PC-3 (cell line): ENCODE measurements at regions of chr17 and their contacts with region 1.

Region 1: GRCh38 chr17:69175812-69176795 is 34.4 kb upstream of the ABCA6 start:
- DNase-seq: peak; percentile 95
- ATAC-seq: peak; percentile 99
- H3K4me3 ChIP-seq: peak overlapping the region; percentile 2; the same call in 1 of the 2 replicates
- H3K27ac ChIP-seq: peak overlapping the region; percentile 83
- H3K4me1 ChIP-seq: peaks cover 24% of the 10 kb centered on the region
- H3K27me3 ChIP-seq: no peaks in the 10 kb centered on the region
- CTCF ChIP-seq: no peak

Region 2: GRCh38 chr17:68560966-68561720 is 615.0 kb before region 1 on chr17:
- CTCF ChIA-PET with region 1: no interaction called
- POLR2A ChIA-PET with region 1: no interaction called
- intact Hi-C with region 1: no loop called
- DNase-seq: no peak
- ATAC-seq: no peak
- H3K4me3 ChIP-seq: no peak overlapping the region
- H3K27ac ChIP-seq: no peak overlapping the region
- H3K4me1 ChIP-seq: no peaks in the 10 kb centered on the region
- H3K27me3 ChIP-seq: 0 out of 2 replicates have a peak, but pooled peaks cover 2% of the 10 kb centered on the region
- CTCF ChIP-seq: no peak

Region 3: DNA sequence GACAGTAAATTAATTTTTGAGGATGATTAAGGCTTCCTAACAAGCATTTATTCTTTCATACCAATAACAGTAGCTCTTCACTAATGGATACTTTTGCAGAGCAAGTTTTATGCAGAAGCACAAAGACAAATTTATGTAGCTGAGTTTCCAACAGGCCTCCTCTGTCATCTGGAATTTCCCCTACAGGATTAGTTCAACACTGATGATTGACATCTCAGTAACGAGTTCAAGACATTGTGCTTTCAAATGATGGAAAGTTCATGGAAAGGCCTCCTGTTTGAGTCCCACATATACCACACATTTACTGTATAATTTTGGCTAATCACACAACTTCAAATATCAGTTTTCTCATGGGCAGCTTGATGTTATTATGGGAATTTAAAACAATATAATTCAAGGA is 12.0 kb after region 1 on chr17:
- CTCF ChIA-PET with region 1: no interaction called
- POLR2A ChIA-PET with region 1: no interaction called
- intact Hi-C with region 1: loop called (anchors 1 kb)
- DNase-seq: no peak
- ATAC-seq: no peak
- H3K4me3 ChIP-seq: no peak overlapping the region
- H3K27ac ChIP-seq: no peak overlapping the region
- H3K4me1 ChIP-seq: no peaks in the 10 kb centered on the region
- H3K27me3 ChIP-seq: no peaks in the 10 kb centered on the region
- CTCF ChIP-seq: no peak